A673 (cell line): ENCODE measurements at regions of chr4 and their contacts with region 1.

Region 1: GRCh38 chr4:106329041-106329618 is 12.8 kb downstream of the AIMP1 start:
- DNase-seq: peak; percentile 59
- H3K4me3 ChIP-seq: no peak overlapping the region
- H3K27ac ChIP-seq: no peak overlapping the region
- H3K4me1 ChIP-seq: no peaks in the 10 kb centered on the region
- H3K27me3 ChIP-seq: no peaks in the 10 kb centered on the region
- CTCF ChIP-seq: peak; percentile 86

Region 2: DNA sequence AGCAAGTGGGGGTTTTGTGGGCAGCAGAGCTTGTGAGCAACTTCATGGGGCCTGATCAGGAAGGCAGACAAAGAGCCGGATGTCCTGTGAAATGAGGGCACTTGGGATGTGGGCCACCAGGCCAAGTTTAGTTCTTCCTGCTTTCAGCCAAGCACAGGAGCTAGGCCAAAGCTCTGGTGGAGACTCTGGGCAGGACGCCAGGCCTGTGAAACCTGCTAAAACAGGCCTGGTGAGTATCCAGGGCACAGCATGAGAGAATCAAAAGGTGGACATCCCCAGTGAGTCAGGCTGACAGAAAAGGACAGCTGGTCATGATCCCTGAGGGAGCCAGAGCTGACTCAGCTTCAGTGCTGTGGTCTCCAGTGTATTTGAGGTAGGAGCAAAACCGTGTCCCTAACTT is 338.2 kb before region 1 on chr4:
- CTCF ChIA-PET with region 1: no interaction called
- POLR2A ChIA-PET with region 1: no interaction called
- intact Hi-C with region 1: no loop called
- DNase-seq: no peak
- H3K4me3 ChIP-seq: no peak overlapping the region
- H3K27ac ChIP-seq: no peak overlapping the region
- H3K4me1 ChIP-seq: no peaks in the 10 kb centered on the region
- H3K27me3 ChIP-seq: no peaks in the 10 kb centered on the region
- CTCF ChIP-seq: no peak

Region 3: DNA sequence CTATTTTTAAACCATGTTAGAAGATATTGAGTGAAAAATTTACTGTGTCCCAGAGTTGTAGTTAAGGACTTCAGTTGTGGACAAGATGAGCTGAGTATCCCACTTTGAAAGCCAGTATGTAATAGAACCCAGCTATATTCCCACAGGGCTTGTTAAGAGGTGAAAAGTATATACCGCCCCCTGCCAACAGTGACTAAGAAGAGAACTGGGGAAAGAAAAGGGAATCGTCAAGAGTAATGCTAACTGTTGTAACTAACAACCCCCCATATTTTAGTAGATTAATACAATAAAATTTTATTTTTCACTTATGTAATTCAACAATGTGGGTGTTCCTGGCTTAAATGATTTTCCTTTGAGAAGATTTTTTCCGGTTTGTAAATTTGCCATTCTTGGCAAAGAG is 289.8 kb after region 1 on chr4:
- CTCF ChIA-PET with region 1: no interaction called
- POLR2A ChIA-PET with region 1: no interaction called
- intact Hi-C with region 1: no loop called
- DNase-seq: peak; percentile 83
- H3K4me3 ChIP-seq: no peak overlapping the region
- H3K27ac ChIP-seq: no peak overlapping the region
- H3K4me1 ChIP-seq: peaks cover 20% of the 10 kb centered on the region
- H3K27me3 ChIP-seq: no peaks in the 10 kb centered on the region
- CTCF ChIP-seq: peak; percentile 43

Region 4: GRCh38 chr4:106809076-106809475 is 479.9 kb after region 1 on chr4:
- CTCF ChIA-PET with region 1: no interaction called
- POLR2A ChIA-PET with region 1: no interaction called
- intact Hi-C with region 1: loop called (anchors 2 kb)
- DNase-seq: peak; percentile 71
- H3K4me3 ChIP-seq: no peak overlapping the region
- H3K27ac ChIP-seq: no peak overlapping the region
- H3K4me1 ChIP-seq: no peaks in the 10 kb centered on the region
- H3K27me3 ChIP-seq: no peaks in the 10 kb centered on the region
- CTCF ChIP-seq: peak; percentile 60